CD8-positive, alpha-beta memory T cell (primary cell): ENCODE measurements at regions of chr4 and their contacts with region 1.

Region 1: DNA sequence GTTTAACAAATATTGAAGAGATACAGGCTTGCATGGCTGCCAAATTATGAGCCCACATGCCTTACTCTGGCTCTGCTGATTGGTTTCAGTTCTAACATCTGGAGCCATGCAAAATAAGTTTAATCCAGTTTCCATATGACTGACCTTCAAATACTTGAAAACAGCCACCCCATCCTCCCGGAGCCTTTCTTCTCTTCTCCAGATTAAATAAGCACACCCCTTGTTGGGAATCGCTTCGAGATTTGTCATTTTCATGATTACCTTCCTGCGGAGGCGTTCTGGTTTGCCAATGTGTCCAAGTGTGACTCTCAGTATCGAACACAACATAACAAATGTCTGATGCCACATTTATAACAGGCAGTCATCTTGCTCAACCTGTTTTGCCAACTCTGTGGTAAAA is 101.6 kb upstream of the JADE1 start:
- DNase-seq: no peak
- H3K4me3 ChIP-seq: no peak overlapping the region
- H3K4me3 Mint-ChIP-seq: no peak overlapping the region
- H3K27ac ChIP-seq: no peak overlapping the region
- H3K27ac Mint-ChIP-seq: no peak overlapping the region
- H3K4me1 ChIP-seq: peaks cover 12% of the 10 kb centered on the region
- H3K4me1 Mint-ChIP-seq: peaks cover 5 to 10% (median 7%) of the 10 kb centered on the region in 3 donors
- H3K27me3 ChIP-seq: no peaks in the 10 kb centered on the region
- H3K27me3 Mint-ChIP-seq: peaks cover 1 to 6% of the 10 kb centered on the region in 2 donors

Region 2: DNA sequence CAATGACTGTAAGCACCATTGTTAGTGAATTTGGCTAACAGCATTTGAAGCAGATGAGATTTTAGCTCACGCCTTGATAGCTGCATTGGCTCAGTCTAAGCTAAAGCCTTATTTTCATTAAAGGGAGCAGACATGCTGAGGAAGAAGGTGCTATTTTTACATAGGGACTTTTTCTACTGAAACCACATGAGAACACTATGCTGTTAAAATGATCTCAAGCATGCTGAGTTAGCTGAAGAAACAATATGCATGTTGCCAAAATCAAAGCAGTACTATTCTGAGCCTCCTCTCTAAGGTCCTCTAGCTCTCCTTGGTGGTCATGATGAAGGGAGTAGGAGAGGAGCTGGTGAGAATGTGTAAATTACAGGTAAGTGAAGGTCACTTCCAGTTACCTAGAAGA is 32.8 kb before region 1 on chr4:
- CTCF ChIA-PET with region 1: no interaction called
- POLR2A ChIA-PET with region 1: interaction called, 11 read pairs
- DNase-seq: no peak
- H3K4me3 ChIP-seq: no peak overlapping the region
- H3K4me3 Mint-ChIP-seq: no peak overlapping the region
- H3K27ac ChIP-seq: no peak overlapping the region
- H3K27ac Mint-ChIP-seq: no peak overlapping the region
- H3K4me1 ChIP-seq: no peaks in the 10 kb centered on the region
- H3K4me1 Mint-ChIP-seq: peaks cover 0 to 3% (median 0%) of the 10 kb centered on the region in 3 donors
- H3K27me3 ChIP-seq: no peaks in the 10 kb centered on the region
- H3K27me3 Mint-ChIP-seq: peaks cover 7 to 17% of the 10 kb centered on the region in 2 donors

Region 3: DNA sequence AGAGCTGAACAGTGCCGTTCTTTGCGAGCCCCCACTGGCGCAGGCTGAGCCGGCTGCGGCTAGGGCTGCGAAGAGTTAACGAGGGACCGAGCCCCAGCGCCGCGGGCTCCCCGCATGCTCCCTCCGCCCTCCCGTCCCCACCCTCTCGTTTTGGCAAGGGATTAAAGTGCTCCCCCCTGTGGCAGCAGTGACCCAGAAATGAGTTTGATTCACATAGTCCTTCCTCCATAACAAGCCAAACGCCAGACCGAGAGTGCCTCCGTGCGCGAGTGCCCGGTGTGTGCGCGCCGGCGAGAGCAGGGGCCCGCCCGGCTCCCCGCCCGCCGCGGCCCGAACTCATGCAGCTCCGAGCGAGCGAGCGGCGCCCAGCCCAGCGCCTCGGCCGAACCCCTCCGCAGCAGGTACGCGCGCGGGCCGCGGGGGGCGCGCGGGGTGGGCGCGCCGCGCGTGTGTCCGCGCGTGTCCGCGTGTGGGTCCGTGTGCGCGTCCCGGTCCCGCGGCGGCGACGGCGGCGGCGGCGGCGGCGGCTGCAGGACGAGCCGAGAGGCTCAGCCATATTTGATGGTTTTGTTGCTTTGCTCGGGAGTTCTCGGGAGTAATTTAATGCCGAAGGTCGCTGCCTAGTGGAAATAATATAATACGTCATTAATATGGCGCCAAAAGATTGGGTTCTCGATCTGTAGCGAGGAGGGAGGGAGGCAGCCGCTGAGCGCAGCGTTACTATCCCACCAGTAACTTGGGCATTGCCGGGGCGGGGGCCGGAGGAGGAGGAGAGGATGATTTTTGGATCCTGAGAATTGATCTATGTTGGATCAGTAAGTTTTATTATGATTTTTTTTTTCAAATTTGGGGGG is 101.8 kb after region 1 on chr4 and contains the start of gene JADE1:
- CTCF ChIA-PET with region 1: no interaction called
- POLR2A ChIA-PET with region 1: no interaction called
- DNase-seq: peak; percentile 77 to 92 (median 87)
- H3K4me3 ChIP-seq: peak within 1 kb of the TSS; percentile 86
- H3K4me3 Mint-ChIP-seq: peak within 1 kb of the TSS; percentile 95 to 99 (median 97)
- H3K27ac ChIP-seq: peak within 1 kb of the TSS; percentile 94
- H3K27ac Mint-ChIP-seq: peak within 1 kb of the TSS; percentile 95 to 99 (median 96)
- H3K4me1 ChIP-seq: peaks cover 17% of the 10 kb centered on the region
- H3K4me1 Mint-ChIP-seq: peaks cover 17 to 25% (median 23%) of the 10 kb centered on the region in 3 donors
- H3K27me3 ChIP-seq: no peaks in the 10 kb centered on the region
- H3K27me3 Mint-ChIP-seq: peaks cover 0 to 2% of the 10 kb centered on the region in 2 donors
- total RNA-seq, gene JADE1: 28.4 to 29.1 TPM